Cardiac septum (tissue), 1 donor: ENCODE measurements at regions of chr3 and their contacts with region 1.

Region 1: DNA sequence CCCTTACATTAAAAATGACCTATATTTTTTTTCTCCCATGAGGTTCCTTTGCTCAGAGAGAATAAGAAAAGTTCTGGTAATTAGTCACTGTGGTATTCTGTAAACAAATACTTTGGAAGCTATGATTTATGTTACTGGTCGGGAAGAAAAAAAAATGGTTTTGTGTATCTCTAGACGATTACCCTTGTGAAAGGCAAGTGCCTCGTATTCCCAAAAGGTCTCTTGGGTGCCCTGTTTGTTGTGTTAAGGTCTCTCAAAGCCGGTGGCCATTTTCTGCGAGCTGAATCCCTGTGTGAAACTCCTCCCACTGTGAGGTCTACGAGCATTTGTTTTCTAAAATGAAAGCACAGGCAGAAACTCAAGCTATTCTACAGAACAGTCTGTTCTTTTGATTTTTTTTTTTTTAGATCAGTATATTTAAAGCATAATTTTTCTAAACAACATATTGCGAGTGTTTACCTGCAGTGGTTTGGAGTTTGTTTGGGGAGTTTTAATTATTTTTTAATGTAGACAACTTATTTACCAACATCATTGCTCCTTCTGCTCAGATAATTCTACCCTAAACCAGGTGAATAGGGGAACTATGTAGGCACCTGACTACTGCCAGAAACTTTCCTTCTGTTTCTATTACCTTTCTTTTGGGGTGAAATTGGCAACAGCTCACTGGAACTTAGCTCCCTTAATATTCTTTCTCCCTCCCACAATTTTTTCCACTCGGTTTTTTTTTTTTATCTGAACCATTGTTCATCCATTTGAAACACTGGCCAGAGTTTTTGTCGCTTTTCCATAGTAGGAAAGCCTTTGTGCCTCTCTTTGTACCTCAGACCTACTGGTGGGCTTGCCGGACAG is 44.0 kb downstream of the ZBTB38 start:
- DNase-seq: no peak

Region 2: GRCh38 chr3:141105828-141106628 is 306.3 kb before region 1 on chr3:
- intact Hi-C with region 1: no loop called
- DNase-seq: peak; percentile 55

Region 3: GRCh38 chr3:141429131-141430044 is 17.1 kb after region 1 on chr3:
- intact Hi-C with region 1: loop called (anchors 2 kb)
- DNase-seq: no peak

Region 4: DNA sequence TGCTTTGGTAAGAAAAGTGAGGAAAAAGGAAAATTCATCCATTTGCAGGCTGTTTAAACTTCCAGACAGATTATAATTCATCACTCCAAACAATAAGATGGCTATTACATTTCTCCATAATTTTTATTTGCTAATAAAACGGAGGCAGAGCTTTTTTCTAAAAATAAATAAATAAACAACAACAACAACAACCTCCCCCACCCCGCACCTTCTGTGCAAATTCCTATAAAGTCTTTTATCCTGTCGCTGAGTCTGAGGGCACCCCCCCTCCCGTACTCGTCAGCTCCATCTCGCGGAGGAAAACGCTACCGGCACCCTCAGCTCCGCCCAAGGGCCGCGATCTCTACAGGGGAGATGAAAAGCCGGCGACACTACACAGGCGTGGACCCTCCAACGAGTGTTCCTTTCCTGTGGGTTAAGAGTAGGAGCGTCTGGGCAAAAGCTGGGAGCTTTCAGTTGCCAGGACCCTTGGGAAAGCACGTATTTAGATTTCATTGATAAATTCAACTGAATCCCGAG is 463.1 kb after region 1 on chr3:
- intact Hi-C with region 1: no loop called
- DNase-seq: peak; percentile 93